ENCODE measurements at regions of chr14 and their contacts with region 1.

Region 1: DNA sequence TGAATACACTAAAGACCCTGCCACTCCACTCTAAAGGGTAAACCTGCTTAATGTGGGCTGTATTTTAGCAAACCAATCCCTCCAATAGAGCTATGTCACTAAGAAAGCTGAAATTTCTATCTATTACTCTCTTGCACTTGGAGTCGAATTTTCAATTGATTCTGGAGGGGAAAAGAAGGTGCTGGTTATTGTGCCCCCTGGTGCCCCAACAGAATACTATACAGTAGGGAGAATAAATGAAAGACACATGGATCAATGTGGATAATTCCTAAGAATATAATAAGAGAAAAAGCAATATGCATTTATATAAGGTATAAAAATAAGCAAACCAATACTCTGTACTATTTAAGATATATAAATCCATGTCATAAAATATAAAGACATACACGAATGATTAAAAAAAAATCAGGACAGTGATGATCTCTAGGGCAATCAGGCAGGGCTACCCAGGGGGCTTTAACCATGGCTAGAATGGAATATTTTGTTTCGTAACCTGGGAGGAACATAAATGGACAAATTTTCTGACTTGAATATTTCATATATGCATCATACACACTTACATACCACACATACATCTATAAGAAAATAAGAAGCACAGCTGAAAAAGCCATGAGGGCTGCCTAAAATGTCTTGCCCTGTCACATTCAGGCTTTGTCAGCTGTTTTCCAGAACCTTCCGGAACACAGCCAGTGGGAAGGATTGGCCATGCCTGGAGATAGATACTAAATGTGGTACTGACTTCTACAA is 54.4 kb downstream of the EFCAB11 start:
- DNase-seq: no peak
- ATAC-seq: peak in 1 of 8 donors; percentile 53
- H3K4me3 ChIP-seq: no peak overlapping the region
- H3K27ac ChIP-seq: no peak overlapping the region
- H3K4me1 ChIP-seq: peaks cover 0 to 12% (median 0%) of the 10 kb centered on the region in 9 donors
- H3K27me3 ChIP-seq: no peaks in the 10 kb centered on the region
- CTCF ChIP-seq: peak in 8 of 9 donors; percentile 29 to 69 (median 60)

Region 2: DNA sequence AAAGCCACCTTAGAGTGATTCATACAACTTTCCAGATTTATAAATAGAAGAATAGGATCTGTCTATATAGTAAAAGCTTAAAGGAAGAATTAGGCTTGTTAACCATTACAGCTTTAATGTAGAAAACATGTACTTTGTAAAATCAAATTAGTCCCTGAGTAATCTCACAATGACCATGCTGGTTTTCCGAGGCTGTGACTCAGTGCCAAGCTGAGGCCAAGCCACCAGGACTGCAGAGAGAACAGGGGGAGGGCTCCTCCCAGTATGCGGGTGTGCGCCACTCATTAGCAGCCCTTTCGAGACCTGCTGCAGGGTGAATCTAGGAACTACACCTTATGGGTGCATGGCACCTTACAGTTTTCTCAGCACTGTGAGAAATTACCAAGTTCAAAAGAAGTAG is 112.6 kb before region 1 on chr14:
- intact Hi-C with region 1: loop called in 1 of 10 experiments (anchors 10 kb)
- DNase-seq: no peak
- ATAC-seq: no peak
- H3K4me3 ChIP-seq: no peak overlapping the region
- H3K27ac ChIP-seq: no peak overlapping the region
- H3K4me1 ChIP-seq: no peaks in the 10 kb centered on the region
- H3K27me3 ChIP-seq: no peaks in the 10 kb centered on the region
- CTCF ChIP-seq: no peak

Region 3: DNA sequence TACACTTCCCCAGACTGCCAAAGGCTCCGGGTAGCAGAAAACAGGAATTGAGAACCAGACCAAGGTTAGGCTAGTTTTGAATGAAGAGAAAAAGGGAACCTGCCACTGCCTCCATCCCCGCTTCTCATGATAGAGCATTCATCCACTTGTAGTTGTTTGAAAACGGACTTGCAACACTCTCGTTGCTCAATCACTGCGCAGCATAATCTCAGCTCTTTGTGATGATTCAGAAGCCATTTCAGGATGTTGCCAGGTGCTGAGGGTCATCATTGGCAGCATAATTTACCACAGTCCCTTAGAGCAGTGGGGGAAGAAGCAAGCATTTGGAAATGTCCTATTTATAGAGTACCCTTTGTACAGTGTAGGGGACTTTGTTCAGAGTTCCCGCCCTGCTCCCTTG is 187.3 kb after region 1 on chr14:
- intact Hi-C with region 1: no loop called
- DNase-seq: peak in 1 of 2 donors; percentile 31
- ATAC-seq: peak; percentile 76 to 99 (median 91)
- H3K4me3 ChIP-seq: no peak overlapping the region
- H3K27ac ChIP-seq: peak overlapping the region in 8 of 10 donors; percentile 4 to 72 (median 40)
- H3K4me1 ChIP-seq: peaks cover 0 to 19% (median 0%) of the 10 kb centered on the region in 9 donors
- H3K27me3 ChIP-seq: no peaks in the 10 kb centered on the region
- CTCF ChIP-seq: no peak